Activated CD4-positive, alpha-beta memory T cell treated with anti-CD3 and anti-CD28 coated beads for 36 hours (primary cell): ENCODE measurements at regions of chr4 and their contacts with region 1.

Region 1: GRCh38 chr4:38523524-38524448 is 140.2 kb upstream of the KLF3 start:
- DNase-seq: peak; percentile 87
- H3K4me3 Mint-ChIP-seq: peak overlapping the region; percentile 54
- H3K27ac Mint-ChIP-seq: peak overlapping the region; percentile 68
- H3K4me1 Mint-ChIP-seq: peaks cover 30% of the 10 kb centered on the region
- H3K27me3 Mint-ChIP-seq: peaks cover 20% of the 10 kb centered on the region

Region 2: DNA sequence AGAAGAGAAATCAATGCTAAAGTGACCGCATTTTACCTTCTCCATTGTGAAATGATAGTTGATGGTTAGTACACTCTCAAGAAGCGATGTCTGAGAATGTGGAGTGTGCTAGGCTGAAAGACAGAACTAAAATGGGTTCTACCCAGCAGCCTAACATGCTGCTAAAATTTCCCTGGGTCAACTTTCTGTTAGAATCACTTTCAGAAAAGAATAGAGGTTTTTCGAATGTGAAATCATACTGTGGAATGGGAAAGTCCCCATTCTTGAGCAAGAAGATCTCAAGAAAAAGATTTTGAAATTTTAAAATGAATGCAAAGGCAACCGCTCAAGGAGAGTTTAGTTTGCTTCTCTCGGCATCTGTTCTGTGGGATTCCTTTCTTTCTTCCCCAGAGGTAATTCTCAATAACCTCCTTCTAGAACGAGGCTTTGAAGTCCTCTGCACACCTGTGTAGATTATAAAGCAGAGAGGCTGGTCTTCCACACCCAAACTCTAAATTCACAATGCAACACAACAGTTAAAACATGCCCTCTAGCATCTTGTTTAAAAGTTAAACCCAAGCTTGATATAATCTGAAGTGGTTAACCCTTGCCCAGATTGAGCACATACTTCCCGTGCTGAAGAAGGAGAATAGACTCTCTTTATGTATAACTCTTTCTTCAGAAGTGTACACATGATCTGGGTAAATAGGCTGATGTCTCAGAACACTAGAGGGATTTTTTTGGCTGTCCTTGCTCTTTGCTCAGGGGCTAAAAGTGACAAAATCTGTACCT is 68.5 kb before region 1 on chr4:
- CTCF ChIA-PET with region 1: no interaction called
- POLR2A ChIA-PET with region 1: no interaction called
- intact Hi-C with region 1: loop called (anchors 1 kb)
- DNase-seq: no peak
- H3K4me3 Mint-ChIP-seq: no peak overlapping the region
- H3K27ac Mint-ChIP-seq: peak overlapping the region; percentile 79
- H3K4me1 Mint-ChIP-seq: peaks cover 49% of the 10 kb centered on the region
- H3K27me3 Mint-ChIP-seq: peaks cover 15% of the 10 kb centered on the region

Region 3: DNA sequence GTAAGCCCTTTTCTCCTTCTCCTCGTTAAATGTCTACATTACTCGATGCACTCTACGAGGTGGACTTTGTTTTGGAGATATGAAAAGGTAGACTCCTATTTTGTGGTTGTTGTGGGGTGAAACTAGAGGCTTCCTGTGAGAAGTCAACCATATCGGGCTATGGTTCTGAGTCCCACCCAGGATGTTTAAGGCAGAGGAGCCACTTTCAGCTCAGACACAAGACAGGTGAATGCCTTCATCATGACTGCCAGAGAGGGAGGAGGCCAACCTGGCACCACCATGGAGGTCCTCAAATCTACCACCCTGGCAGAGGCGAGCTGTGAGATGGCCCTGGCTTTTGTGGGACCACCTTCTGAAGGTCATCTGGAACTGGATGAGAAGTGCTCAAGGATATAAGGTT is 14.2 kb before region 1 on chr4:
- CTCF ChIA-PET with region 1: no interaction called
- POLR2A ChIA-PET with region 1: no interaction called
- intact Hi-C with region 1: loop called (anchors 2 kb)
- DNase-seq: peak; percentile 50
- H3K4me3 Mint-ChIP-seq: peak overlapping the region; percentile 24
- H3K27ac Mint-ChIP-seq: no peak overlapping the region
- H3K4me1 Mint-ChIP-seq: peaks cover 81% of the 10 kb centered on the region
- H3K27me3 Mint-ChIP-seq: no peaks in the 10 kb centered on the region

Region 4: GRCh38 chr4:38619996-38620789 is 96.4 kb after region 1 on chr4:
- CTCF ChIA-PET with region 1: no interaction called
- POLR2A ChIA-PET with region 1: interaction called, 5 read pairs
- intact Hi-C with region 1: loop called (anchors 2 kb)
- DNase-seq: no peak
- H3K4me3 Mint-ChIP-seq: no peak overlapping the region
- H3K27ac Mint-ChIP-seq: no peak overlapping the region
- H3K4me1 Mint-ChIP-seq: peaks cover 20% of the 10 kb centered on the region
- H3K27me3 Mint-ChIP-seq: no peaks in the 10 kb centered on the region